ENCODE measurements at regions of chr1 and their contacts with region 1.

Region 1: DNA sequence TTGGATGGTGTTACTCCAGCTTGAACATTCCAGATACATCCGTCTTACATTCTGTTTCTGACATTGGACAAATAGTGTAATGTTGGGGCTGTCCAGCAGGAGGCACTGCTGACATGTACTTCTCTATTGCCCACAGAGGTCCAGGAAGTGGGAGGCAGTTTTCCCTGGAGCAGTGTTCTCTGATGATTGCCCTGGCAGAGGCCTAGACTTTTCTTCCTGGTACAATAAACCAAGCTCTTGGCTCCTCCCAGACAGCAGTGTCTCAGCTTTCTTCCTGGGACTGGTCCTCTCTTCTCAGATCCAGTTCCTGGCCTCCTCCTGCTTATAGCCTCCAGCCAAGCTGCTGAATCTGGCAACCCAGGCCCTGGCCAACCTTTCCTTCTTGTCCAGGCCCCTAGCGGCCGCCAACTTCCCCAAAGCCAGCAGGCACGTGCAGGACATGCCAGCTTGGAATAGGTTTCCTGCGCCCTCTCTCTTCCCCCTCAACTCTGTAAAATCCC is 14.9 kb upstream of the IFNLR1 start:
- DNase-seq: peak; percentile 44 to 79
- ATAC-seq: peak; percentile 68 to 86 (median 72)
- H3K4me3 ChIP-seq: no peak overlapping the region
- H3K27ac ChIP-seq: peak overlapping the region in 1 of 10 donors; percentile 42
- H3K4me1 ChIP-seq: peaks cover 0 to 17% (median 4%) of the 10 kb centered on the region in 9 donors
- H3K27me3 ChIP-seq: peaks cover 0 to 20% (median 0%) of the 10 kb centered on the region in 7 donors
- CTCF ChIP-seq: peak; percentile 57 to 86 (median 77)

Region 2: GRCh38 chr1:24289937-24290595 is 88.1 kb after region 1 on chr1:
- intact Hi-C with region 1: loop called in 1 of 10 experiments (anchors 10 kb)
- DNase-seq: peak; percentile 85 to 88
- ATAC-seq: peak; percentile 85 to 99 (median 97)
- H3K4me3 ChIP-seq: no peak overlapping the region
- H3K27ac ChIP-seq: peak overlapping the region in 1 of 10 donors; percentile 28
- H3K4me1 ChIP-seq: peaks cover 0 to 29% (median 11%) of the 10 kb centered on the region in 9 donors
- H3K27me3 ChIP-seq: no peaks in the 10 kb centered on the region
- CTCF ChIP-seq: no peak

Region 3: GRCh38 chr1:24391882-24392603 is 190.1 kb after region 1 on chr1:
- intact Hi-C with region 1: loop called (anchors 1 to 2 kb)
- DNase-seq: peak; percentile 48 to 55
- ATAC-seq: peak; percentile 81 to 91 (median 88)
- H3K4me3 ChIP-seq: peak overlapping the region in 7 of 10 donors; percentile 11 to 36 (median 25)
- H3K27ac ChIP-seq: peak overlapping the region in 9 of 10 donors; percentile 57 to 85 (median 78)
- H3K4me1 ChIP-seq: peaks cover 0 to 31% (median 15%) of the 10 kb centered on the region in 9 donors
- H3K27me3 ChIP-seq: no peaks in the 10 kb centered on the region
- CTCF ChIP-seq: peak; percentile 43 to 79 (median 71)

Region 4: DNA sequence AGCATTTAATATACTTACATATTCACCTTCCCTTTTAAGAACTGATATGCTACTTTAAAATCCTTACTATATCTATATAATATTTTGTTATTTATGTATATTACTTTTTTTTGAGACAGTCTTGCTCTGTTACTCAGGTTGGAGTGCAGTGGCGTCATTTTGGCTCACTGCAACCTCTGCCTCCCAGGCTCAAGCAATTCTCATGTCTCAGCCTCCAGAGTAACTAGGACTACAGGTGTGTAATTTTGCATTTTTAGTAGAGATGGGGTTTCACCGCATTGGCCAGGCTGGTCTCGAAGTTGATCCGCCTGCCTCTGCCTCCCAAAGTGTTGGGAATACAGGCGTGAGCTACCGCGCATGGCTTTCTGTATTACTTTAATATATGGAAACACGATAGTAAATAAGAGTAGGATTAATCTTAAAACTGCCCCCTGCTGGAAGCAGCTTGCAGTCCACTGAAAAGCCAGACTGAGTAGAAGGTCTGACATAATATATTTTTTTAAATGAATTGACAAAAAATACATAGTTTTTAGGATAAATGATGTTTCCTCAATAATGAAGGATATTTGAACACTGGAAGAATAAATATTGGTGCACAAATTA is 325.1 kb after region 1 on chr1:
- intact Hi-C with region 1: loop called in 2 of 10 experiments (anchors 5 kb)
- DNase-seq: no peak
- ATAC-seq: no peak
- H3K4me3 ChIP-seq: no peak overlapping the region
- H3K27ac ChIP-seq: no peak overlapping the region
- H3K4me1 ChIP-seq: no peaks in the 10 kb centered on the region
- H3K27me3 ChIP-seq: no peaks in the 10 kb centered on the region
- CTCF ChIP-seq: peak in 8 of 9 donors; percentile 35 to 64 (median 50)

Region 5: GRCh38 chr1:24621121-24621520 is 419.1 kb after region 1 on chr1:
- intact Hi-C with region 1: loop called in 1 of 10 experiments (anchors 10 kb)
- DNase-seq: no peak
- ATAC-seq: no peak
- H3K4me3 ChIP-seq: no peak overlapping the region
- H3K27ac ChIP-seq: no peak overlapping the region
- H3K4me1 ChIP-seq: no peaks in the 10 kb centered on the region
- H3K27me3 ChIP-seq: peaks cover 0 to 27% (median 6%) of the 10 kb centered on the region in 7 donors
- CTCF ChIP-seq: no peak